ENCODE measurements at regions of chr10 and their contacts with region 1.

Region 1: GRCh38 chr10:117216611-117217195 is 19.4 kb downstream of the KCNK18 start:
- DNase-seq: peak; percentile 39 to 82 (median 69)
- ATAC-seq: peak; percentile 93
- H3K4me3 ChIP-seq: peak overlapping the region; percentile 49 to 55
- H3K4me3 Mint-ChIP-seq: peak overlapping the region; percentile 77
- H3K27ac ChIP-seq: no peak overlapping the region
- H3K27ac Mint-ChIP-seq: no peak overlapping the region
- H3K4me1 ChIP-seq: peaks cover 5% of the 10 kb centered on the region
- H3K4me1 Mint-ChIP-seq: peaks cover 4% of the 10 kb centered on the region
- H3K27me3 ChIP-seq: peaks cover 10 to 11% of the 10 kb centered on the region in 2 experiments
- H3K27me3 Mint-ChIP-seq: peaks cover 32% of the 10 kb centered on the region
- CTCF ChIP-seq: peak; percentile 100

Region 2: GRCh38 chr10:117201826-117202225 is 14.9 kb before region 1 on chr10:
- CTCF ChIA-PET with region 1: interaction called, 15 read pairs
- POLR2A ChIA-PET with region 1: no interaction called
- intact Hi-C with region 1: no loop called
- DNase-seq: no peak
- ATAC-seq: no peak
- H3K4me3 ChIP-seq: no peak overlapping the region
- H3K4me3 Mint-ChIP-seq: no peak overlapping the region
- H3K27ac ChIP-seq: no peak overlapping the region
- H3K27ac Mint-ChIP-seq: no peak overlapping the region
- H3K4me1 ChIP-seq: no peaks in the 10 kb centered on the region
- H3K4me1 Mint-ChIP-seq: no peaks in the 10 kb centered on the region
- H3K27me3 ChIP-seq: no peaks in the 10 kb centered on the region
- H3K27me3 Mint-ChIP-seq: peaks cover 18% of the 10 kb centered on the region
- CTCF ChIP-seq: no peak

Region 3: GRCh38 chr10:117241541-117242462 is 25.1 kb after region 1 on chr10:
- CTCF ChIA-PET with region 1: interaction called, 12 read pairs
- POLR2A ChIA-PET with region 1: no interaction called
- intact Hi-C with region 1: no loop called
- DNase-seq: no peak
- ATAC-seq: no peak
- H3K4me3 ChIP-seq: no peak overlapping the region
- H3K4me3 Mint-ChIP-seq: peak overlapping the region; percentile 51
- H3K27ac ChIP-seq: no peak overlapping the region
- H3K27ac Mint-ChIP-seq: no peak overlapping the region
- H3K4me1 ChIP-seq: peaks cover under 1% of the 10 kb centered on the region
- H3K4me1 Mint-ChIP-seq: peaks cover 8% of the 10 kb centered on the region
- H3K27me3 ChIP-seq: no peaks in the 10 kb centered on the region
- H3K27me3 Mint-ChIP-seq: peaks cover 21% of the 10 kb centered on the region
- CTCF ChIP-seq: no peak

Region 4: GRCh38 chr10:117425974-117426566 is 209.4 kb after region 1 on chr10:
- CTCF ChIA-PET with region 1: interaction called, 6 read pairs
- POLR2A ChIA-PET with region 1: no interaction called
- intact Hi-C with region 1: loop called in 1 of 2 experiments (anchors 10 kb)
- DNase-seq: no peak
- ATAC-seq: no peak
- H3K4me3 ChIP-seq: no peak overlapping the region
- H3K4me3 Mint-ChIP-seq: no peak overlapping the region
- H3K27ac ChIP-seq: no peak overlapping the region
- H3K27ac Mint-ChIP-seq: no peak overlapping the region
- H3K4me1 ChIP-seq: no peaks in the 10 kb centered on the region
- H3K4me1 Mint-ChIP-seq: no peaks in the 10 kb centered on the region
- H3K27me3 ChIP-seq: no peaks in the 10 kb centered on the region
- H3K27me3 Mint-ChIP-seq: peaks cover 3% of the 10 kb centered on the region
- CTCF ChIP-seq: no peak

Region 5: DNA sequence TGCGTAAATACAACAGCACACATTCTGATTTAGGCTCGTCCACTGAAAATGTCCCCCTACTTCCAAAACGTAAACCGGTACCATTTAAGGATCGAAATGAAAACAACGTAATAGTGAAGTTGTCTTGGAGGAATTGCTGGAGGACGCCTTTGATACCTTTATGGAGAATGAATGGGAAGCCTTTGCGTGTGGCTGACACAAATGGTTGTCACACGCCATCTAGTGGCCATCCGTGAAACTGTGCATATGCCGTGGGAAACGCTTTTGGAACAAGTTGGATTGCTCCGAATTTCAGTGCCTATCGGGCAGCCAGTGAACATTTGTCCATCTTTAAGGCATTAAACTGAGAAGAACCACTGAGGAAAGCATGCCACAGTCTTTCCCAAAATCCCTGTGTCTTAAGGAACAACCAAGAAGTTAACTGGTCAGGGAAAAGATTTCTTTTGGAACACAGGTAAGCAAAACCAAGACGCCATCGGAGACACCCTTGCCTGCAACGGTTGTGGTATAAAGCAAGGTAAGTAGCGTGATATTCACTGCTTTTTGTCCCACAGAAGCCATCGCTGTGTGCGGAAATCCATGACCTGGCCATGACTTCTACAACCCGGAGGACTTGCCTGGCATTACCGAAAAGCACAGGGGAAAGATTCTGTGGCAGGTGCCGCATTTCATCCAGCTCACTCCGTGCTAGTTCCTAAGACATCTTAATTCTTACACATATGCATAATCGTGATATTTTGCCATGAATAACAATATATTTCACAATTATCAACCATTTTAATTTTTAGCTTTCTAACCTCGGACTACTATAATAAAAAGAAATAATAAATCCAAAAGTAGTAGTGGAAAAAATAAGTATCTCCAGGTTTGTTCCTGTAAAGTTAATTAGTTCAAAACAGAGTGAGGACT is 1024.8 kb after region 1 on chr10:
- CTCF ChIA-PET with region 1: interaction called, 17 read pairs
- POLR2A ChIA-PET with region 1: no interaction called
- intact Hi-C with region 1: loop called in 1 of 2 experiments (anchors 1 kb)
- DNase-seq: peak; percentile 21 to 76 (median 63)
- ATAC-seq: no peak
- H3K4me3 ChIP-seq: no peak overlapping the region
- H3K4me3 Mint-ChIP-seq: no peak overlapping the region
- H3K27ac ChIP-seq: no peak overlapping the region
- H3K27ac Mint-ChIP-seq: no peak overlapping the region
- H3K4me1 ChIP-seq: no peaks in the 10 kb centered on the region
- H3K4me1 Mint-ChIP-seq: no peaks in the 10 kb centered on the region
- H3K27me3 ChIP-seq: peaks cover 0 to 9% of the 10 kb centered on the region in 2 experiments
- H3K27me3 Mint-ChIP-seq: peaks cover 34% of the 10 kb centered on the region
- CTCF ChIP-seq: peak; percentile 97